ENCODE measurements at regions of chr10 and their contacts with region 1.

Region 1: DNA sequence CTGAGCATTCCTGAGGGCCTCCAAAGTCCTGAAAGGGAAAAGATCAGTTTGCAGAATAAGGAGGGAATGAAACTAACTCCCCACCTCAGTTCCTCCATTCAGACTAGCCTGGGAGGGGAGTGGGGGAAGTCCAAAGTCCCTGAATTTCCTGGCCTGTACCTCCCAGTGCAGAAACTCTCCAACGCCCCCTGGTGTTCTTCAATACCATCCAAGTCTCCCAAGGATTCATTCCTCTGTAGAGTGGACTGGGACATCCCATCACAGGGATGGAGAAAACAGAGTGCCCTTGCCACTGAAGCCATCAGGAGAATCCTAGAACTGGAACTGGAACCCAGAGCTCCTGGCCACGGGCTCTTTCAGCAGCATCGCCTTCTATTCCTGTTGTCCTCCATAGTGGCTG is 1.6 kb upstream of the COL13A1 start:
- DNase-seq: peak; percentile 81 to 86
- H3K4me3 ChIP-seq: no peak overlapping the region
- H3K4me3 Mint-ChIP-seq: no peak overlapping the region
- H3K27ac Mint-ChIP-seq: no peak overlapping the region
- H3K4me1 ChIP-seq: peaks cover 18% of the 10 kb centered on the region
- H3K4me1 Mint-ChIP-seq: peaks cover 7% of the 10 kb centered on the region
- H3K27me3 ChIP-seq: peaks cover 7% of the 10 kb centered on the region
- H3K27me3 Mint-ChIP-seq: peaks cover 36% of the 10 kb centered on the region
- CTCF ChIP-seq: peak; percentile 78 to 96

Region 2: GRCh38 chr10:69628891-69629290 is 171.2 kb before region 1 on chr10:
- CTCF ChIA-PET with region 1: no interaction called
- POLR2A ChIA-PET with region 1: no interaction called
- intact Hi-C with region 1: no loop called
- DNase-seq: peak in 1 of 2 experiments; percentile 4
- H3K4me3 ChIP-seq: no peak overlapping the region
- H3K4me3 Mint-ChIP-seq: no peak overlapping the region
- H3K27ac Mint-ChIP-seq: no peak overlapping the region
- H3K4me1 ChIP-seq: peaks cover 6% of the 10 kb centered on the region
- H3K4me1 Mint-ChIP-seq: no peaks in the 10 kb centered on the region
- H3K27me3 ChIP-seq: no peaks in the 10 kb centered on the region
- H3K27me3 Mint-ChIP-seq: peaks cover 3% of the 10 kb centered on the region
- CTCF ChIP-seq: no peak

Region 3: GRCh38 chr10:69644658-69645295 is 155.3 kb before region 1 on chr10:
- CTCF ChIA-PET with region 1: interaction called, 4 read pairs
- POLR2A ChIA-PET with region 1: no interaction called
- intact Hi-C with region 1: loop called (anchors 1 kb)
- DNase-seq: peak; percentile 74 to 81
- H3K4me3 ChIP-seq: no peak overlapping the region
- H3K4me3 Mint-ChIP-seq: no peak overlapping the region
- H3K27ac Mint-ChIP-seq: no peak overlapping the region
- H3K4me1 ChIP-seq: no peaks in the 10 kb centered on the region
- H3K4me1 Mint-ChIP-seq: no peaks in the 10 kb centered on the region
- H3K27me3 ChIP-seq: 0 out of 2 replicates have a peak, but pooled peaks cover 1% of the 10 kb centered on the region
- H3K27me3 Mint-ChIP-seq: peaks cover 19% of the 10 kb centered on the region
- CTCF ChIP-seq: peak; percentile 96

Region 4: GRCh38 chr10:69696073-69696731 is 103.9 kb before region 1 on chr10:
- CTCF ChIA-PET with region 1: interaction called, 11 read pairs
- POLR2A ChIA-PET with region 1: no interaction called
- intact Hi-C with region 1: loop called (anchors 1 kb)
- DNase-seq: peak in 1 of 2 experiments; percentile 80
- H3K4me3 ChIP-seq: no peak overlapping the region
- H3K4me3 Mint-ChIP-seq: no peak overlapping the region
- H3K27ac Mint-ChIP-seq: peak overlapping the region; percentile 69
- H3K4me1 ChIP-seq: no peaks in the 10 kb centered on the region
- H3K4me1 Mint-ChIP-seq: no peaks in the 10 kb centered on the region
- H3K27me3 ChIP-seq: no peaks in the 10 kb centered on the region; the same call in 1 of the 2 replicates
- H3K27me3 Mint-ChIP-seq: peaks cover 23% of the 10 kb centered on the region
- CTCF ChIP-seq: peak; percentile 68 to 85

Region 5: DNA sequence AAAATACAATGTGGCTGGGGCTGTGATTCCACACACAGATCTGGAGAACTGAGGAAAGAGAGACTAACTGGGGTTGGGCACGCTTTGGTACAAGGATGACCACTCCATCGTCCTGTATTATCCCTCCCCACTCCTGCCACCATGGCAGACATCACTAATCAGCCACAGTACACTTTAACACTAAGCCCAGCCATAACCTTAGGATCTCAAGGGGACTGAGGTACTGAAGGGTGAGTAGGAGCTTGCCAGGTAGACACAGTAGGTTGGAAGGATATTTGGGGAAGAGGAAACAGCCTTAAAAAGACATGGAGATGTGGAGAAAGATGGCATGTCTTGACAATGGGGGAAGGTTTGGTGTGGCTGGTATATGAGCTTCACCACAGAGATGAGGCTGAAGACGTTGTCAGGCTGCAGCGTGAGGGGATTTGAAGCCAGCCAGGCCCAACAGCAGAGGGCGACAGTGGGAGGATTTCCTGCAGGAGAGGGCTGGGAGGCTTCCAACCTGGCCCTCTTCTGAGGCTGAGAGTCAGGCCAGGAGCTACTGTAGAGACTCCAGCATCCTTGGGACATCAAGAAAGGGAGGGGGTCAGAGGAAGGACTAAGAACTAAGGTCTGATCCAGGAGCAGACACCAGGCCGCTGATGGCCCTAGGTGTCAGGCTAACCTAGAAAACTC is 57.0 kb before region 1 on chr10:
- CTCF ChIA-PET with region 1: interaction called, 4 read pairs
- POLR2A ChIA-PET with region 1: no interaction called
- intact Hi-C with region 1: loop called (anchors 1 kb)
- DNase-seq: peak in 1 of 2 experiments; percentile 57
- H3K4me3 ChIP-seq: no peak overlapping the region
- H3K4me3 Mint-ChIP-seq: no peak overlapping the region
- H3K27ac Mint-ChIP-seq: no peak overlapping the region
- H3K4me1 ChIP-seq: no peaks in the 10 kb centered on the region
- H3K4me1 Mint-ChIP-seq: no peaks in the 10 kb centered on the region
- H3K27me3 ChIP-seq: no peaks in the 10 kb centered on the region; the same call in 1 of the 2 replicates
- H3K27me3 Mint-ChIP-seq: peaks cover 27% of the 10 kb centered on the region
- CTCF ChIP-seq: peak; percentile 46 to 74

Region 6: GRCh38 chr10:69786791-69787190 is 13.3 kb before region 1 on chr10:
- CTCF ChIA-PET with region 1: interaction called, 18 read pairs
- POLR2A ChIA-PET with region 1: no interaction called
- intact Hi-C with region 1: loop called (anchors 1 kb)
- DNase-seq: no peak
- H3K4me3 ChIP-seq: no peak overlapping the region
- H3K4me3 Mint-ChIP-seq: no peak overlapping the region
- H3K27ac Mint-ChIP-seq: no peak overlapping the region
- H3K4me1 ChIP-seq: no peaks in the 10 kb centered on the region
- H3K4me1 Mint-ChIP-seq: no peaks in the 10 kb centered on the region
- H3K27me3 ChIP-seq: peaks cover 1% of the 10 kb centered on the region; the same call in 1 of the 2 replicates
- H3K27me3 Mint-ChIP-seq: peaks cover 8% of the 10 kb centered on the region
- CTCF ChIP-seq: no peak

Region 7: GRCh38 chr10:69810675-69811397 is 10.7 kb after region 1 on chr10:
- CTCF ChIA-PET with region 1: interaction called, 10 read pairs
- POLR2A ChIA-PET with region 1: no interaction called
- intact Hi-C with region 1: no loop called
- DNase-seq: no peak
- H3K4me3 ChIP-seq: no peak overlapping the region
- H3K4me3 Mint-ChIP-seq: no peak overlapping the region
- H3K27ac Mint-ChIP-seq: no peak overlapping the region
- H3K4me1 ChIP-seq: no peaks in the 10 kb centered on the region
- H3K4me1 Mint-ChIP-seq: no peaks in the 10 kb centered on the region
- H3K27me3 ChIP-seq: peaks cover under 1% of the 10 kb centered on the region; the same call in 1 of the 2 replicates
- H3K27me3 Mint-ChIP-seq: peaks cover 12% of the 10 kb centered on the region
- CTCF ChIP-seq: no peak

Region 8: GRCh38 chr10:70060389-70060788 is 260.3 kb after region 1 on chr10:
- CTCF ChIA-PET with region 1: no interaction called
- POLR2A ChIA-PET with region 1: no interaction called
- intact Hi-C with region 1: no loop called
- DNase-seq: no peak
- H3K4me3 ChIP-seq: no peak overlapping the region
- H3K4me3 Mint-ChIP-seq: no peak overlapping the region
- H3K27ac Mint-ChIP-seq: no peak overlapping the region
- H3K4me1 ChIP-seq: no peaks in the 10 kb centered on the region
- H3K4me1 Mint-ChIP-seq: no peaks in the 10 kb centered on the region
- H3K27me3 ChIP-seq: no peaks in the 10 kb centered on the region; the same call in 1 of the 2 replicates
- H3K27me3 Mint-ChIP-seq: peaks cover 31% of the 10 kb centered on the region
- CTCF ChIP-seq: peak; percentile 18 to 21

Measured in Caco-2 (cell line).